Activated CD8-positive, alpha-beta memory T cell treated with anti-CD3 and anti-CD28 coated beads, Interleukin-2, amount 10 ng/mL, durations not matched to agents 7 days and 5 days (primary cell): ENCODE measurements at regions of chr15 and their contacts with region 1.

Region 1: GRCh38 chr15:91852741-91853510 is 582 bp upstream of the SLCO3A1 start:
- DNase-seq: peak; percentile 79
- ATAC-seq: peak; percentile 79
- H3K4me3 Mint-ChIP-seq: peak overlapping the region; percentile 77
- H3K27ac Mint-ChIP-seq: peak overlapping the region; percentile 81
- H3K4me1 Mint-ChIP-seq: peaks cover 58% of the 10 kb centered on the region
- H3K27me3 Mint-ChIP-seq: peaks cover 3% of the 10 kb centered on the region

Region 2: DNA sequence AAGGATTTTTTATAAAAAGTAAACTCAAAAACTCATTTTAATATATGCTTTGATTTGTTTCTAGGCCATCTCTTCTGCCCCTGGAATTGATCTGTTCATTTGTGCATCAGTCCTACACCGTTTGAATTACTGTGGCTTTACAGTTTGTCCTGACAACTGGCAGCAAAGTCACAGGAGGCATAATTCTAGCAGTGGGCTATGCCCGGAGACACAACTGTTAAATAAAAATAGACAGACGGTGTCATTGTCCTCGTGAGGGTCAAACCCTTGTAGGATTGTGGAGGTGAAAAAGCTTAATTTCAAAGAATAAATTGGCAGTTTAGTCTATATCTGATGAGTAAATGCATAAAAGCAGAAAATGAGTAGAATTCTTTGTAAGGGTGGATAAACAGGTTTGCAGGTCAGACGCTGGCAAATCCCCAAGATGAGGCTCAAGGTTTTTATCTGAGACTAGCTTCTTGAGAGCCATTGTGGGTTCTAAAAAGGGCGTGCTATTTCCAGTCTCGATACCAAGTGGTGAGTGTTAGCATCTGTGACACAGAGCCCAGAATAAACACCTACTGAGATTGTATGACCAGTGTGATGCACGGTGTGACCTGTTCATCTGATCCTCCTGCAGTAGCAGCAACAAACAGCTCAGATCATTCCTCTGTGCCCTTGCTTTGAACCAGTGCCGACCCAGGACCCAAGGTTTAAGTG is 50.9 kb before region 1 on chr15:
- CTCF ChIA-PET with region 1: no interaction called
- DNase-seq: no peak
- ATAC-seq: no peak
- H3K4me3 Mint-ChIP-seq: no peak overlapping the region
- H3K27ac Mint-ChIP-seq: no peak overlapping the region
- H3K4me1 Mint-ChIP-seq: no peaks in the 10 kb centered on the region
- H3K27me3 Mint-ChIP-seq: peaks cover 36% of the 10 kb centered on the region

Region 3: DNA sequence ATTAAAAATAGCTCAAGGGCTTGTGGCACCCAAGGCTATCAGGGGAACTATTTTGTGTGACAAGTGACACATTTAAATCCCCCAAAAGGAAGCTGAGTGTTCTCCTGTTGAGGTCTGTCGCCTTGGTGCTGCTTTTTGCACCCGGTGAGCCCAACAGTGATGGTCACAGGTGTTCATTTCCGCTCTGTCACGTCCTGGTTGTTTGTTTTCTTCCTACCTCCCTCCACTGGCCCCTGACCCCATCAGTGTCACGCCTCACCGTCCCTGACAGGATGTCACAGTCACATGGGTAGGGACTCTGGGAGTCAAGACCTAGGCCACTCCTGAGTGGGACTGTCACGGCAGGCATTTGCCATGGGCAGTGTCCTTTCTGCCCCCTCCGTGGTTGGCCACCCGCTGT is 11.7 kb after region 1 on chr15:
- CTCF ChIA-PET with region 1: interaction called, 11 read pairs
- DNase-seq: peak; percentile 56
- ATAC-seq: peak; percentile 33
- H3K4me3 Mint-ChIP-seq: no peak overlapping the region
- H3K27ac Mint-ChIP-seq: no peak overlapping the region
- H3K4me1 Mint-ChIP-seq: peaks cover 68% of the 10 kb centered on the region
- H3K27me3 Mint-ChIP-seq: no peaks in the 10 kb centered on the region

Region 4: GRCh38 chr15:91942676-91943576 is 90.0 kb after region 1 on chr15:
- CTCF ChIA-PET with region 1: interaction called, 16 read pairs
- DNase-seq: peak; percentile 70
- ATAC-seq: peak; percentile 86
- H3K4me3 Mint-ChIP-seq: peak overlapping the region; percentile 50
- H3K27ac Mint-ChIP-seq: peak overlapping the region; percentile 57
- H3K4me1 Mint-ChIP-seq: peaks cover 23% of the 10 kb centered on the region
- H3K27me3 Mint-ChIP-seq: no peaks in the 10 kb centered on the region

Region 5: GRCh38 chr15:92005154-92005553 is 152.2 kb after region 1 on chr15:
- CTCF ChIA-PET with region 1: no interaction called
- DNase-seq: no peak
- ATAC-seq: no peak
- H3K4me3 Mint-ChIP-seq: no peak overlapping the region
- H3K27ac Mint-ChIP-seq: no peak overlapping the region
- H3K4me1 Mint-ChIP-seq: peaks cover 20% of the 10 kb centered on the region
- H3K27me3 Mint-ChIP-seq: no peaks in the 10 kb centered on the region

Region 6: DNA sequence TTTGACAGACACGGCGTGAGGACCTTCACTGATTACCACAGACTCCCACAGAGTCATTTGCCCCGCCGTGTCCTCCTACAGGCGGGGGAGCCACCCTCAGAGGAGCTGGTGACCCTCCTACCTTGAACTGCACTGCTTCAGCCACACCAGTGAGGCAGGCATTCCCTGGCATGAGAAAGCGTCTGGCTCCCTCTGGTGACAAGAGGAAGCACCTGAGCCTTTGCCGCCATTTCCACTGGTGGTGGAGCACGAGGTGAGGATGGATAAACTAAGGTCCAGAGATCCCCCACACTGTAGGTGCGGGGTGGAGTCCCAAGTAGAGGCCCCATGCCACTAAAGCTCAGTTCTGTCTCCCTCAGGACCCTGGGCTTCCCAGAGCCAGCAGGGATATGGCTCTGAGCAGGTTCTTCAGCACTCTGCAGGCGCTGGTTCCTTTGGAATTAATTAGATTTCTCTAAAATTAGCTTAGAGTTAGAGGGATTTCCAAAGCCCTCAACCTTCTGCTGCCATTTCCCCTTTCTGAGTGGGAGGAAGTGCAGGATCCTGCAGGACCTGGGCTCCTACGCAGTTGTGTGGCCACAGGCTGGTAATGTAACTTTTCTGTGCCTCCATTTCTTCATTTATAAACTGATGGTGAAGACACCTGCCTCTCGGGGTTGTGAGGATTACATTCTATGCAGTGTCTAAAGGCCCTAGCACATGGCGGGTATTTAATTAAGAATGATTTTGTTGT is 224.6 kb after region 1 on chr15:
- CTCF ChIA-PET with region 1: interaction called, 32 read pairs
- DNase-seq: peak; percentile 74
- ATAC-seq: peak; percentile 50
- H3K4me3 Mint-ChIP-seq: no peak overlapping the region
- H3K27ac Mint-ChIP-seq: no peak overlapping the region
- H3K4me1 Mint-ChIP-seq: peaks cover 31% of the 10 kb centered on the region
- H3K27me3 Mint-ChIP-seq: no peaks in the 10 kb centered on the region